ENCODE measurements at regions of chr13 and their contacts with region 1.

Region 1: GRCh38 chr13:78137404-78138142 is 218.9 kb upstream of the EDNRB start:
- DNase-seq: peak; percentile 60 to 76
- H3K4me3 ChIP-seq: no peak overlapping the region
- H3K4me3 Mint-ChIP-seq: no peak overlapping the region
- H3K27ac Mint-ChIP-seq: peak overlapping the region; percentile 40
- H3K4me1 ChIP-seq: peaks cover 23% of the 10 kb centered on the region
- H3K4me1 Mint-ChIP-seq: peaks cover 18% of the 10 kb centered on the region
- H3K27me3 ChIP-seq: no peaks in the 10 kb centered on the region
- H3K27me3 Mint-ChIP-seq: no peaks in the 10 kb centered on the region
- CTCF ChIP-seq: peak; percentile 69 to 78

Region 2: GRCh38 chr13:78241278-78241919 is 103.8 kb after region 1 on chr13:
- CTCF ChIA-PET with region 1: interaction called, 13 read pairs
- POLR2A ChIA-PET with region 1: no interaction called
- intact Hi-C with region 1: loop called (anchors 1 kb)
- DNase-seq: peak; percentile 41 to 56
- H3K4me3 ChIP-seq: no peak overlapping the region
- H3K4me3 Mint-ChIP-seq: no peak overlapping the region
- H3K27ac Mint-ChIP-seq: no peak overlapping the region
- H3K4me1 ChIP-seq: no peaks in the 10 kb centered on the region
- H3K4me1 Mint-ChIP-seq: peaks cover 7% of the 10 kb centered on the region
- H3K27me3 ChIP-seq: no peaks in the 10 kb centered on the region
- H3K27me3 Mint-ChIP-seq: peaks cover 3% of the 10 kb centered on the region
- CTCF ChIP-seq: peak; percentile 80 to 86

Region 3: GRCh38 chr13:78317030-78317429 is 179.5 kb after region 1 on chr13:
- CTCF ChIA-PET with region 1: interaction called, 4 read pairs
- POLR2A ChIA-PET with region 1: no interaction called
- intact Hi-C with region 1: loop called (anchors 1 kb)
- DNase-seq: peak in 1 of 2 experiments; percentile 6
- H3K4me3 ChIP-seq: no peak overlapping the region
- H3K4me3 Mint-ChIP-seq: no peak overlapping the region
- H3K27ac Mint-ChIP-seq: no peak overlapping the region
- H3K4me1 ChIP-seq: no peaks in the 10 kb centered on the region
- H3K4me1 Mint-ChIP-seq: no peaks in the 10 kb centered on the region
- H3K27me3 ChIP-seq: no peaks in the 10 kb centered on the region
- H3K27me3 Mint-ChIP-seq: peaks cover 6% of the 10 kb centered on the region
- CTCF ChIP-seq: peak; percentile 23 to 55

Region 4: DNA sequence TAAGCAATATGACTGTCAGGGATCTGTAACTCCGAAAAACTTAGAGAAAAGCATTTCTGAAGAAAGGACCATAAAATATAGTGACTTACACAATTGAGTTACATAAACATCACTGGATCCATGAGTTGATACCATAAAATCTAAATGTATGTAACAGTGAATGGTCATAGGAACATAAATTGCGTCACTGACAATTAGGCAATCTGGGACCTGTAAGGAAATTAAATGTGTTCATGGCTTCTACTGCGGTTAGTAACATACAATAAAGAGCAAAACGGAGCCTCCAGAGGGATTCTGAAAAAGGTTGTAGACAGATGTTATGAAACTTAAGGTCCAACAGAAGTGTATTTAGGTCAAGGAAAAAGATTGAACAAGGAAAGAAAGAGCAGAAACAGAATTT is 438.7 kb after region 1 on chr13:
- CTCF ChIA-PET with region 1: no interaction called
- POLR2A ChIA-PET with region 1: no interaction called
- intact Hi-C with region 1: loop called (anchors 10 kb)
- DNase-seq: no peak
- H3K4me3 ChIP-seq: no peak overlapping the region
- H3K4me3 Mint-ChIP-seq: no peak overlapping the region
- H3K27ac Mint-ChIP-seq: no peak overlapping the region
- H3K4me1 ChIP-seq: no peaks in the 10 kb centered on the region
- H3K4me1 Mint-ChIP-seq: no peaks in the 10 kb centered on the region
- H3K27me3 ChIP-seq: no peaks in the 10 kb centered on the region
- H3K27me3 Mint-ChIP-seq: peaks cover 17% of the 10 kb centered on the region
- CTCF ChIP-seq: no peak

Region 5: DNA sequence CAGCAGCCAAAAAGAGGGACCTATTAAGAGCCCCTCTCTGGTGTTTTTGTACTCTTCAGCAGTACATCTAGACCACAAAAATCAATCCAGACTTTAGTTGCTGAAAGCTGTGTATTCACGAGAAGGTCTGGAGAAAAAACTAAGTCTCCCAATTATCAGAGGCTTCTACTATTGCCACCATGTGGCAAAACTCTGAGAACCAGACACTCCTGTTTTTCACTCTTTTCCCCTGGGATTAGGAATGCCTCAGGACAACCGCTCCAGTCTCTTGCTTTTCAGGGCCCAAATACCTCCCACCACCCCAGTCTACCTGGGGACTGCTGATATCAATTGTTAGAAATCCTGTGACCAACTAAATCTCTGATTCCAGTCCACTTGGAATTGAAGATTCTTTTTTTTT is 551.4 kb after region 1 on chr13:
- CTCF ChIA-PET with region 1: interaction called, 3 read pairs
- POLR2A ChIA-PET with region 1: no interaction called
- intact Hi-C with region 1: loop called (anchors 1 kb)
- DNase-seq: peak in 1 of 2 experiments; percentile 40
- H3K4me3 ChIP-seq: no peak overlapping the region
- H3K4me3 Mint-ChIP-seq: no peak overlapping the region
- H3K27ac Mint-ChIP-seq: no peak overlapping the region
- H3K4me1 ChIP-seq: no peaks in the 10 kb centered on the region
- H3K4me1 Mint-ChIP-seq: no peaks in the 10 kb centered on the region
- H3K27me3 ChIP-seq: no peaks in the 10 kb centered on the region
- H3K27me3 Mint-ChIP-seq: peaks cover 8% of the 10 kb centered on the region
- CTCF ChIP-seq: peak in 1 of 2 experiments; percentile 51

Region 6: GRCh38 chr13:78978381-78978998 is 840.9 kb after region 1 on chr13:
- CTCF ChIA-PET with region 1: interaction called, 17 read pairs
- POLR2A ChIA-PET with region 1: no interaction called
- intact Hi-C with region 1: loop called (anchors 1 kb)
- DNase-seq: peak; percentile 47 to 65
- H3K4me3 ChIP-seq: no peak overlapping the region
- H3K4me3 Mint-ChIP-seq: no peak overlapping the region
- H3K27ac Mint-ChIP-seq: no peak overlapping the region
- H3K4me1 ChIP-seq: no peaks in the 10 kb centered on the region
- H3K4me1 Mint-ChIP-seq: no peaks in the 10 kb centered on the region
- H3K27me3 ChIP-seq: no peaks in the 10 kb centered on the region
- H3K27me3 Mint-ChIP-seq: peaks cover 5% of the 10 kb centered on the region
- CTCF ChIP-seq: peak; percentile 74 to 77